ENCODE measurements at regions of chr12 and their contacts with region 1.

Region 1: DNA sequence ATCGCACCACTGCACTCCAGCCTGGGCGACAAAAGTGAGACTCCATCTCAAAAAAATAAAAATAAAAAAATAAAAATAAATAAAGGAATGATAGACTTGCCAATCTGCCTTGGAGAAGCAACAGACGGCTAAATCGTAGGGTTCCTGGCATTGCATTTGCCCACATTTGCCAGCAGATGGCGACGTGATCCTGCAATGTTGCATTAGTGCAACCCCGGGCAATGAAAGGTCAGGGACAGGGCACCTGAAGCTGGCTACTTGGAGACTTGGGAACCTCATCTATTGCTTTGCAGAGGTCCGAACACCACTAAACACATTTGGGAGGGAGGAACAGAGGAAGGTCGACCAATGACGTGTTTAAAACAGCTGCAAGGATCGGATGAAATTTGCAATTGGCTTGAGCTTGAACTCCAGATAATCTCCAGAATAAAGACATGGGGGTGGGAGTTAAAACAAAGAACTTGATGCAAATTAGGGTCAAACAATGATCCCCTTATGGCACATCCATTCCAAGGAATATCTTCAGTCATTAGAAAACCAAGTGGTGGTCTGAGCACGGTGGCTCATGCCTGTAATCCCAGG is 34.6 kb downstream of the SPRING1 start:
- DNase-seq: peak; percentile 60 to 62
- ATAC-seq: peak; percentile 45 to 84 (median 76)
- H3K4me3 ChIP-seq: no peak overlapping the region
- H3K27ac ChIP-seq: no peak overlapping the region
- H3K4me1 ChIP-seq: peaks cover 0 to 5% (median 2%) of the 10 kb centered on the region in 9 donors
- H3K27me3 ChIP-seq: no peaks in the 10 kb centered on the region
- CTCF ChIP-seq: peak; percentile 85 to 96 (median 95)

Region 2: GRCh38 chr12:115998119-115998633 is 705.1 kb before region 1 on chr12:
- intact Hi-C with region 1: loop called in 6 of 10 experiments (anchors 5 to 10 kb)
- DNase-seq: no peak
- ATAC-seq: peak in 5 of 8 donors; percentile 26 to 56 (median 46)
- H3K4me3 ChIP-seq: no peak overlapping the region
- H3K27ac ChIP-seq: no peak overlapping the region
- H3K4me1 ChIP-seq: peaks cover 0 to 9% (median 4%) of the 10 kb centered on the region in 9 donors
- H3K27me3 ChIP-seq: no peaks in the 10 kb centered on the region
- CTCF ChIP-seq: peak; percentile 79 to 91 (median 87)

Region 3: DNA sequence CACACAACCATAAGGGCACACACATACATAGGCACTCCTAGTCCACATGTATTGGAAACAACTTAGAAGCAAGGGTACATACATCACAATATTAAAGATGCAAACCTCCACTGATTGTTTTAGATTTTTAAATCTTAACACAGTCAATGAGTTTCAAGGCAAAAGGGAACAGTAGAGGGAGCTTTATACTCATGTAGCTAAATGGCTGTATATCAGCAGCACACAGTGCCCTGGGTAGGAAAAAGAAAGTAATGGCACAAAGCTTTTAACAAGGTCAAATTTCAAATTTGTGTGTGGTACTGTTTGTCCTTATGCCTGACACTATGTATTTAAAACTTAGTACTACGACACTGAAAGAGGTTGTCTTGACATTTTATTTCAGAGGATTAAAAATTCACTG is 687.8 kb before region 1 on chr12:
- intact Hi-C with region 1: loop called in 2 of 10 experiments (anchors 10 kb)
- DNase-seq: no peak
- ATAC-seq: peak in 7 of 8 donors; percentile 47 to 88 (median 81)
- H3K4me3 ChIP-seq: no peak overlapping the region
- H3K27ac ChIP-seq: no peak overlapping the region
- H3K4me1 ChIP-seq: peaks cover 0 to 39% (median 11%) of the 10 kb centered on the region in 9 donors
- H3K27me3 ChIP-seq: no peaks in the 10 kb centered on the region
- CTCF ChIP-seq: peak; percentile 20 to 82 (median 60)

Region 4: GRCh38 chr12:116277393-116278278 is 425.7 kb before region 1 on chr12 and contains the start of gene MED13L:
- intact Hi-C with region 1: loop called in 2 of 10 experiments (anchors 5 to 10 kb)
- DNase-seq: peak; percentile 87 to 91
- ATAC-seq: peak; percentile 90 to 96 (median 94)
- H3K4me3 ChIP-seq: peak within 1 kb of the TSS; percentile 77 to 96 (median 88)
- H3K27ac ChIP-seq: peak within 1 kb of the TSS; percentile 89 to 100 (median 95)
- H3K4me1 ChIP-seq: peaks cover 0 to 56% (median 29%) of the 10 kb centered on the region in 9 donors
- H3K27me3 ChIP-seq: no peaks in the 10 kb centered on the region
- CTCF ChIP-seq: peak in 7 of 9 donors; percentile 15 to 73 (median 52)
- total RNA-seq, gene MED13L: 53.8 to 76.5 (median 67.0) TPM

Region 5: DNA sequence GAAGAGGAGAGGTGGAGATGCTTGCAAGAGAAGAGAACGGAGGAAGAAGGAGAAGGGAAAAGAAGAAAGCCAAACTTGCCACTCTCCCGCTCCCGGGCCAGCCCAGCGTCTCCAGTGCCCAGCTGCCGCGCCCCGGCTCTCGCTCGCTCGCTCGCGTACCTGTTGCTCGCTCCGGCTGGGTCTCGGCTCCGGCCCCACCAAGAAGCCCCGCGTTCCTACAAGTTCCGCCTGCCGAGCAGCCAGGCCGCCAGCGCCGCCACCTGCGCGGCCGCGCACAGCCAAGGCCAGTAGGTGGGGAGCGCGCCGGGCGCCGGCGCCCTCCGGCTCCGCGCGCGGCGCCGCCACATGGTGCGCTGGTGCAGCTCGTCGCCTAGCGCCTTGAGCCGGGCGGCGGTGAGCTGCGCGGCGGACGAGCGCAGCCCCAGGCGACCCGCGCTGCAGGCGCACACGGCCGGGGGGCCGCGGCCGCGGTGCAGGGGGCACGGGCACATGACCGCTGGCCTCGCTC is 177.6 kb after region 1 on chr12:
- intact Hi-C with region 1: loop called in 7 of 10 experiments (anchors 2 to 10 kb)
- DNase-seq: peak; percentile 10 to 28
- ATAC-seq: peak; percentile 41 to 88 (median 74)
- H3K4me3 ChIP-seq: peak overlapping the region in 9 of 10 donors; percentile 27 to 54 (median 47)
- H3K27ac ChIP-seq: no peak overlapping the region
- H3K4me1 ChIP-seq: peaks cover 8 to 43% (median 32%) of the 10 kb centered on the region in 9 donors
- H3K27me3 ChIP-seq: peaks cover 7 to 91% (median 76%) of the 10 kb centered on the region in 7 donors
- CTCF ChIP-seq: peak in 2 of 9 donors; percentile 10 to 28

Region 6: DNA sequence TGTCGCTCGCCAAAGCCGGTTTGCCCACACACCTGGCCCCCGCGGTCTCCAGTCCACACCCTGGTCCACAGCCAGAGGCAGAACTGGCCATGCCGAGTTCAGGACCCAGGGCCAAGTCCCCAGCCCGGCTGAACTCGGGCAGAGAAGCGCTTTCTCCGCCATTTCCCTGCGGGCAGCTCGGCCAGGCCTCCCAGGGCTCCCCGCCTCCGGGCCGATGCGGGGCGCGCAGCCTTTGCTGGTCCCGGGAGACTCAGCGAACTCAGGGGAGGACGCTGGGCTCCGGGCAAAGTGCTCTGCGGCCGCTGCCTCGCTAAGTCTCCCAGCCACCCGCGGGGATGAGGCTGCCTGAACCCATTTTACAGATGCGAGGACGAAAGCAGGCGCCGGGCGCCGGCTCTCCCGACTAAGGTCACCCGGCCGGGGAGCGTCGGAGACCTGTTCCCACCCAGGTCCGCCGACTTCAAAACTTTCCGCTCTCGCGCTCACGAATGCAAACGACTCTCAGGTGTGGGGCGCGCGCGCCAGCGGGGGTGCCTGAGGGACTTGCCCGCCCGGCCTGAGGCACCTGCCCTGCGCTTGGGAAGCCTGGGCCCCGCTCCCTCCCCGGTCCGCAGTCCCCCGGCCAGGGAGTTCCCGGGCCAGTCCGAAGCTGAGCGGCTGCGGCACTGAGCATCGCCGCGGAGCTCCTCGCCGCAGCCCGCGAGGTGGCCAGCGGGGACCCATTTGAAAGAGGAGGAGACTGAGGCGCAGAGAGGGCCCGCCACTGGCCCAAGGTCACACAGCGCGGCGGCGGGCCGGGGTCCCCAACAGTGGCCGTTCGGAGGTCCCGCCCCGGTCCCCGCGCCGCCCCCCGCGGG is 395.3 kb after region 1 on chr12:
- intact Hi-C with region 1: no loop called
- DNase-seq: peak in 1 of 2 donors; percentile 32
- ATAC-seq: peak in 6 of 8 donors; percentile 3 to 58 (median 22)
- H3K4me3 ChIP-seq: peak overlapping the region; percentile 62 to 93 (median 79)
- H3K27ac ChIP-seq: peak overlapping the region in 9 of 10 donors; percentile 57 to 81 (median 75)
- H3K4me1 ChIP-seq: peaks cover 4 to 72% (median 38%) of the 10 kb centered on the region in 9 donors
- H3K27me3 ChIP-seq: peaks cover 0 to 44% (median 18%) of the 10 kb centered on the region in 7 donors
- CTCF ChIP-seq: no peak

Region 7: DNA sequence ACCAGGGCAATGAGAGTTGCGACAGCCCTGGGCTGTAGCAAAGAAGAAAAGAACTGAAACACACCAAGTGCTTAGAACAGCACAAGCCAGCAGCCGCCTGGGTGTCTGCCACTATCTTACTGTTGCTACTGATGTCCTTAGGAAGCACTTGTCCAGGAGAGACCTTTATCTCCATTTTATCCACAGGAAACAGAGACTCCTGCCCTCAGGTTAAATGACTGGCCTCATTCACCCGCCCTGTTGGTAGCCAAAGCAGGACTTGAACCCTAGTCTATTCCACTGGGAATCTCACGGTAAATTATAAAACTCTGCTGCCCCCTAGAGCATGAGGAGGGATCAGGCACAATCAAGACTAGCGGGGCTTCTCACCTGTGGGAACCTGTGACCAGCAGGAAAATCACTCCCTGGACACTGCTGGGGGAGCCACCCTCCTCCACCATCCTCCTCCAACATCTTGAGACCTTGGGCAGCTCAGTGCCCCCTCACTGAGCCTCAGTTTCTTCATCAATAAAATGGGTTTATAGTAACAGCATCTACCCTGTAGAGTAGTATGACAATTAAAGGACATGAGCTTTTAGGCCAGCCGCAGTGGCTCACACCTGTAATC is 416.4 kb after region 1 on chr12:
- intact Hi-C with region 1: loop called in 2 of 10 experiments (anchors 10 kb)
- DNase-seq: no peak
- ATAC-seq: peak in 7 of 8 donors; percentile 27 to 54 (median 42)
- H3K4me3 ChIP-seq: no peak overlapping the region
- H3K27ac ChIP-seq: peak overlapping the region in 7 of 10 donors; percentile 21 to 66 (median 55)
- H3K4me1 ChIP-seq: peaks cover 10 to 57% (median 30%) of the 10 kb centered on the region in 9 donors
- H3K27me3 ChIP-seq: no peaks in the 10 kb centered on the region
- CTCF ChIP-seq: peak; percentile 60 to 73 (median 71)

Region 8: DNA sequence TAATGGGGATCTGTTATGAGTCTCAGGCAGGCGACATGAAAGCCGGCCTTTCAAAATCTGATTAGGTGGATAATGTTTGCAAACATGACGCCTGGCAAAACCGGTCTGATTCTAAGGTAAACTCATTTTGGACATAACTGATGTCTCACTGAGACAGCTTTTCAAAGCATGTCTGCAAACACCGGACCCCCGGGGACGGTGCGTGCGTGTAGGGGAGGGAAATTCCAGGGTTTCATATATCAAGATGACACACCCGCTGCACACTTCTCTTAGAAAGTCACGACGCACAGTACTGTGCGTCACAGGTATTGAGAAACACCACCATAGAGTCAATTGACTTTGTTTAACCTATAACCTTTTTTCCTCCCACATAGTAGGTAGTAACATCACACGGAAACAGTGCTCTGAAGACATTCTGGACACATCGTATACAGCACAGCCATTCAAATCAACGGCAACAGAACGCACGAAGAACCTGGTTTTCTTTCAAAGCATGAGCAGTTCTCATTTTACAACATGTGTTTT is 439.8 kb after region 1 on chr12:
- intact Hi-C with region 1: loop called in 1 of 10 experiments (anchors 10 kb)
- DNase-seq: no peak
- ATAC-seq: no peak
- H3K4me3 ChIP-seq: no peak overlapping the region
- H3K27ac ChIP-seq: no peak overlapping the region
- H3K4me1 ChIP-seq: peaks cover 3 to 25% (median 12%) of the 10 kb centered on the region in 9 donors
- H3K27me3 ChIP-seq: no peaks in the 10 kb centered on the region
- CTCF ChIP-seq: no peak

Measured in heart right ventricle (tissue), 16 donors.